Activated naive CD8-positive, alpha-beta T cell treated with anti-CD3 and anti-CD28 coated beads, Interleukin-2, amount 10 ng/mL, durations not matched to agents 7 days and 5 days (primary cell): ENCODE measurements at regions of chr12 and their contacts with region 1.

Region 1: GRCh38 chr12:108856428-108857157 is 790 bp downstream of the SSH1 start:
- DNase-seq: no peak
- ATAC-seq: peak; percentile 41
- H3K4me3 Mint-ChIP-seq: peak overlapping the region; percentile 87
- H3K27ac Mint-ChIP-seq: peak overlapping the region; percentile 92
- H3K4me1 Mint-ChIP-seq: peaks cover 30% of the 10 kb centered on the region
- H3K27me3 Mint-ChIP-seq: peaks cover 10% of the 10 kb centered on the region

Region 2: DNA sequence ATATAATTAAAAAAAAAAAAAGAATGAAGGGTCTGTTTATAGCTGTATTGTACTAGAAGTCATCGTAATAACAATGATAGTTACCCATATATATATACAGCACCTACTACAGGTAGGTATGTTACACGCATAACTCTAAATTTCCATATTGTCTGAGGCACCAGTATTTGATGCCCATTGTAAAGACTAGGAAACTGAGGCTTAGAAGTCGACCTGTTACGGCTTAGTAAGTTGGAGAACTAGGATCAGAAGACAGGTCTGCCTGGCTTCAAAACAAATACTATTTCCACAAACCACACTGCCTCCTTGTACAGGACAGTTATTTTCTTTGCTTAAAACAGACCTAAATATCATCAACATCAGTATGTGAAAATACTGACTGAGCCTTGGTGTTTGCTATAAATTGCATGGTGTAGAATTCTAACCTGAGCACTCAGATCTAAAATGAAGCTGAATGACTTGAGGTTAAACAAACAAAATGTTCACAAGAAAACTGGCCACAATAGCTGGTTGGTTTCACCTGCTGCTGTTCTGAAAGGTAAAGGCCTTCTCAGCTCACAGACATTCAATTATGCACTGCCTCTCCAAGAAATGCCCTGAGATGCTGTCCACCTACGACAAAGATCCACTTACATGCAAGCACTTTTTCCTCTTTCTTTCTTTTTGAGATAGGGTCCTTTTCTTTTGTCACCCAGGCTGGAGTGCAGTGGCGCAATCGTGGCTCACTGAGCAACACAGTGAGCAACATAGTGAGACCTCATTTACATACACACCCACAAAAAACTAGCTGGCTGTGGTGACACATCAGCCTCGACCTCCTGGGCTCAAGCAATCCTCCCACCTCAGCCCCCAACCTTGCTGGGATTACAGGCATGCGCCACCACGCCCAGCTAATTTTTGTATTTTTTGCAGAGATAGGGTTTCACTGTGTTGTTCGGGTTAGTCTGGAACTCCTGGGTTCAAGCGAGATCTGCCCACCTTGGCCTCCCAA is 34.9 kb before region 1 on chr12:
- POLR2A ChIA-PET with region 1: interaction called, 12 read pairs
- DNase-seq: no peak
- ATAC-seq: peak; percentile 70
- H3K4me3 Mint-ChIP-seq: no peak overlapping the region
- H3K27ac Mint-ChIP-seq: peak overlapping the region; percentile 55
- H3K4me1 Mint-ChIP-seq: peaks cover 33% of the 10 kb centered on the region
- H3K27me3 Mint-ChIP-seq: no peaks in the 10 kb centered on the region

Region 3: GRCh38 chr12:108833355-108833733 is 23.2 kb before region 1 on chr12:
- POLR2A ChIA-PET with region 1: interaction called, 25 read pairs
- DNase-seq: no peak
- ATAC-seq: no peak
- H3K4me3 Mint-ChIP-seq: no peak overlapping the region
- H3K27ac Mint-ChIP-seq: no peak overlapping the region
- H3K4me1 Mint-ChIP-seq: peaks cover 45% of the 10 kb centered on the region
- H3K27me3 Mint-ChIP-seq: no peaks in the 10 kb centered on the region

Region 4: GRCh38 chr12:108838194-108839017 is 18.2 kb before region 1 on chr12:
- POLR2A ChIA-PET with region 1: interaction called, 25 read pairs
- DNase-seq: peak; percentile 77
- ATAC-seq: peak; percentile 94
- H3K4me3 Mint-ChIP-seq: peak overlapping the region; percentile 71
- H3K27ac Mint-ChIP-seq: peak overlapping the region; percentile 89
- H3K4me1 Mint-ChIP-seq: peaks cover 46% of the 10 kb centered on the region
- H3K27me3 Mint-ChIP-seq: no peaks in the 10 kb centered on the region

Region 5: GRCh38 chr12:108868781-108869180 is 12.2 kb after region 1 on chr12:
- POLR2A ChIA-PET with region 1: interaction called, 14 read pairs
- DNase-seq: no peak
- ATAC-seq: no peak
- H3K4me3 Mint-ChIP-seq: no peak overlapping the region
- H3K27ac Mint-ChIP-seq: no peak overlapping the region
- H3K4me1 Mint-ChIP-seq: peaks cover 1% of the 10 kb centered on the region
- H3K27me3 Mint-ChIP-seq: no peaks in the 10 kb centered on the region

Region 6: DNA sequence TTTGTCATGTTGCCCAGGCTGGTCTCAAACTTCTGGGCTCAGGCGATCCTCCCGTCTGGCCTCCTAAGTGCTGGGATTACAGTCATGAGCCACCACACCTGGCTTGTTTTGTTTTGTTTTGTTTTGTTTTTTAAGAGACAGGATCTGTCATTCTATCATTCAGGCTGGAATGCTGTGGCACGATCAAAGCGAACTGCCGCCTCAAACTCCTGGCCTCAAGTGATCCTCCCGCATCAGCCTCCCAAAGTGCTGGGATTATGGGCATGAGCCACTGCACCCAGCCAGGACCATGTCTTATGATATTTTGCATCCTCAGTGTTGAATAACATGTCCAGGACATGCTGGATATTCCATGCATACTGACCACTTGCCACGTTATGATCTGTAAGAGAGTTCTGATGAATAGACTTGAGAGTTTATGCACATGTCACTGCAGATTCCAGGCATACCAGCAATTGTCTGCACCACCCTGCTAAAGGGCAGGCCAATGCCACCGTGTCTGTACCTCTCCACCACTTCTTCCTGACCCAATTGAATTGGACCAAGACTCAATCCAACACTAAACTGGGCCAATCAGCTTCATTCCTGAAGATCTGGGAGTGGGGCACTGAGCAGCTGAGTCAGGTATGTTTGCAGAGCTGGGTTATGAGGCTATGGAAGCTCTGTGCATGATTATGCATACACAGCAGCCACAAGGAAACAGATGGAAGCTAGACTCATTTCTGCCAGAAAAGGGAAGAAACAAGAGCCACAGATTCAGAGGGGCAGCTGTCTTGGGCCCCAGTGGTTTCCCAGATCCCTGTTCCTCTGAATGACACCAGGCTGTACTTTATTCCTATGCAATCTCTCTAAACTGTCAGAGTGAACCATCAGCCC is 51.1 kb after region 1 on chr12:
- POLR2A ChIA-PET with region 1: no interaction called
- DNase-seq: no peak
- ATAC-seq: no peak
- H3K4me3 Mint-ChIP-seq: no peak overlapping the region
- H3K27ac Mint-ChIP-seq: no peak overlapping the region
- H3K4me1 Mint-ChIP-seq: no peaks in the 10 kb centered on the region
- H3K27me3 Mint-ChIP-seq: peaks cover 29% of the 10 kb centered on the region